Activated naive CD4-positive, alpha-beta T cell treated with anti-CD3 and anti-CD28 coated beads for 36 hours (primary cell): ENCODE measurements at regions of chr12 and their contacts with region 1.

Region 1: DNA sequence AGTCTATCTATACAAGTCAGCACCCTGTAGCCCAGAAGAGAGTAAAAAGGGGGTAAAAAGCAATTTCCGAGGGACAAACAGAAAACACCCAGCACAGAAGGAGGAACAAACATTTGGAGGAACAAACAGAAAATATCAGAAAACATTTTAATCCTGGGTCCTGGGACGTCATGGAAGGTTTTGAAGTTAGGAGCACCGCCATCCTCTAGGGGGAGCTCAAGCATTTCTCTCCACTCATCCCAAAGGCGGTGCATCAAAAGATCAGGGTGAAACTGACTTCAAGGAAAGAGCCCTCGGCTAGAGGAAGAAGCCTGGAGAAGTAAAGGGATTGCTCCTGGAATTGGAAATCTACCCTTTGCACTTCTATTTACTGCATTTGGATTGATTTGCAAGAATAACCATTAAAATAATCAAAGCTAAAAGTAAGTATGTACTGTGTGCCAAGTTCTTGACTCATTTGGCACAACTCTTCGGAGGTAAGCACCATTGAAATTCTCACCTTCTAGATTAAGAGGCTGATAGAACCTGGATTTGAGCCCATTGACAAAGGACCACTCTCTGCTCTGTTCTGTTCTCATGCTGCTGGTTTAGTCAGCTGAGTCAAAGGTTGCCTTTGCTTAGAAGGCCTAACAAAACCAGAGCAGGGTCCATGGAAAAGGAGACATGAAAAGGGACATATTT is 17.2 kb upstream of the POC1B start:
- DNase-seq: peak; percentile 79
- H3K4me3 Mint-ChIP-seq: no peak overlapping the region
- H3K27ac Mint-ChIP-seq: no peak overlapping the region
- H3K4me1 Mint-ChIP-seq: peaks cover 4% of the 10 kb centered on the region
- H3K27me3 Mint-ChIP-seq: no peaks in the 10 kb centered on the region

Region 2: GRCh38 chr12:89280833-89281538 is 262.1 kb before region 1 on chr12:
- CTCF ChIA-PET with region 1: no interaction called
- intact Hi-C with region 1: no loop called
- DNase-seq: no peak
- H3K4me3 Mint-ChIP-seq: peak overlapping the region; percentile 36
- H3K27ac Mint-ChIP-seq: peak overlapping the region; percentile 71
- H3K4me1 Mint-ChIP-seq: peaks cover 30% of the 10 kb centered on the region
- H3K27me3 Mint-ChIP-seq: no peaks in the 10 kb centered on the region

Region 3: GRCh38 chr12:89470741-89471509 is 72.1 kb before region 1 on chr12:
- CTCF ChIA-PET with region 1: interaction called, 10 read pairs
- intact Hi-C with region 1: no loop called
- DNase-seq: no peak
- H3K4me3 Mint-ChIP-seq: no peak overlapping the region
- H3K27ac Mint-ChIP-seq: no peak overlapping the region
- H3K4me1 Mint-ChIP-seq: peaks cover 44% of the 10 kb centered on the region
- H3K27me3 Mint-ChIP-seq: no peaks in the 10 kb centered on the region

Region 4: GRCh38 chr12:89862511-89863179 is 319.6 kb after region 1 on chr12:
- CTCF ChIA-PET with region 1: no interaction called
- intact Hi-C with region 1: loop called (anchors 2 kb)
- DNase-seq: peak; percentile 57
- H3K4me3 Mint-ChIP-seq: peak overlapping the region; percentile 70
- H3K27ac Mint-ChIP-seq: peak overlapping the region; percentile 92
- H3K4me1 Mint-ChIP-seq: peaks cover 39% of the 10 kb centered on the region
- H3K27me3 Mint-ChIP-seq: no peaks in the 10 kb centered on the region

Region 5: GRCh38 chr12:90102957-90103652 is 560.1 kb after region 1 on chr12:
- CTCF ChIA-PET with region 1: interaction called, 27 read pairs
- intact Hi-C with region 1: loop called (anchors 1 kb)
- DNase-seq: peak; percentile 32
- H3K4me3 Mint-ChIP-seq: no peak overlapping the region
- H3K27ac Mint-ChIP-seq: no peak overlapping the region
- H3K4me1 Mint-ChIP-seq: peaks cover 8% of the 10 kb centered on the region
- H3K27me3 Mint-ChIP-seq: peaks cover 7% of the 10 kb centered on the region

Region 6: DNA sequence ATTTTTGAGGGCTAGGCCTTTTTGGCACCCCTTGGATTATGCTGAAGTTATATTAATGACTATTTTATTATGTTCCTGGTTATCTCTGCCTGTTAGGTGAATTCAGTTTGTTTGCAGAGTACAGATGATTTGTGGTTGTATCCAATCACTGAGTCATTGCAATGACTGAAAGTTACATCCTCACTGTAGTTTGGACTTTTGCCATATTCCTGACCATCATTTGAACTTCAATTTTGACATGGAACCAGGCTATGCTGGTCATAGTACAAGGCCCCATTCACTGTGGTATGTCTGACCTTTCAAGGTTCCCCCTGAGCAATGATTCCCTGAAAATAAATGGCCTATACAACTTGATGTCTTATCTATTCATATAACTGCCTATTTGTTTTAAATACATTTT is 790.9 kb after region 1 on chr12:
- CTCF ChIA-PET with region 1: no interaction called
- intact Hi-C with region 1: loop called (anchors 10 kb)
- DNase-seq: no peak
- H3K4me3 Mint-ChIP-seq: no peak overlapping the region
- H3K27ac Mint-ChIP-seq: no peak overlapping the region
- H3K4me1 Mint-ChIP-seq: no peaks in the 10 kb centered on the region
- H3K27me3 Mint-ChIP-seq: peaks cover 1% of the 10 kb centered on the region

Region 7: GRCh38 chr12:90959538-90960139 is 1416.6 kb after region 1 on chr12:
- CTCF ChIA-PET with region 1: no interaction called
- intact Hi-C with region 1: loop called (anchors 5 kb)
- DNase-seq: peak; percentile 29
- H3K4me3 Mint-ChIP-seq: no peak overlapping the region
- H3K27ac Mint-ChIP-seq: no peak overlapping the region
- H3K4me1 Mint-ChIP-seq: no peaks in the 10 kb centered on the region
- H3K27me3 Mint-ChIP-seq: no peaks in the 10 kb centered on the region